ENCODE measurements at regions of chr6 and their contacts with region 1.

Region 1: GRCh38 chr6:44265007-44265721 is at the start of gene NFKBIE:
- DNase-seq: peak; percentile 89
- H3K4me3 Mint-ChIP-seq: peak within 1 kb of the TSS; percentile 97
- H3K27ac Mint-ChIP-seq: peak within 1 kb of the TSS; percentile 91
- H3K4me1 Mint-ChIP-seq: peaks cover 43% of the 10 kb centered on the region
- H3K27me3 Mint-ChIP-seq: peaks cover 18% of the 10 kb centered on the region
- total RNA-seq, gene NFKBIE: 23.8 and 25.1 TPM in 2 replicates

Region 2: DNA sequence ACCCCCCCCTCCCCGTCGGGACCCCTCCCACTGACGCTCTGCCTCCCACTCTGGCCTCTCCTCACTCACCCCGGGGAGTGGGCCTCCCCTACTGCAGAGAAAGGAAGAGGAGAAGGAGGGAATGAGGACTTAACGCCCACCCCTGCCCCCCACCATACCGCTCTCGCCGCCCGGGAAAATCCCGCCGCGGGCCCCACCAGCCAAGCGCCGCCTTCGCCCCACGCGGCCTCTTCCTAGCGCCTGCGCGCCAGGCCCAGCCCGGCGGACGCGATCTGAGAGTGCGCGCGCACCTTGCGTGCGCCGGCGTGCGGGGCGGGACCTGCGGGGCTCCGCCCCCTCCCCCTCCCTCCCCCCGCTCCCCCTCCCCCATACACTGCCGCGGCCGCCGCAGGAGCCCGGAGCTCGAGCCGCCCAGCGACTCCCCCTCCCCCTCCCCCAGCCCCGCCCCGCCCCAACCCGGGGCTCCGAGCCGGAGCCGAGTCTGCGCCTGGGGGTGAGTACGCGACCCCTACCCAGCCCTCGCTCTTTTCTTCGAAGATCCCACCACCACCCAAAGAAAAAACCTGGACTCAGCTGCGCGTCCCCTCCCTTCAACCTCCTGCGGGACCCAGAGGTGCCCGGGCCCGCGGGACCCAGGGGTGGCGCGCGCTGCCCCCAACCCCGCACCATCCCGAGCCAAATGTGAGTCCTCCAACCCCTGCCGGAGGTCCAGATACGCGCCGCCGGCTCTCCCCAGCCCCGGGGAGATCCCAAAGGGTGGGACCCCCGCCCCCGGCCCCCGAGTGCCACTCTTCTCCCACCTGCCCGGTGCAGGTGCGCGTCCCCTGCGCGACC is 137.8 kb before region 1 on chr6 and contains the starts of genes MRPL14 and TMEM63B:
- intact Hi-C with region 1: loop called (anchors 5 kb)
- DNase-seq: peak; percentile 86
- H3K4me3 Mint-ChIP-seq: peak within 1 kb of the TSS; percentile 85
- H3K27ac Mint-ChIP-seq: peak within 1 kb of the TSS; percentile 93
- H3K4me1 Mint-ChIP-seq: peaks cover 43% of the 10 kb centered on the region
- H3K27me3 Mint-ChIP-seq: no peaks in the 10 kb centered on the region
- total RNA-seq, gene MRPL14: 67.3 and 70.3 TPM in 2 replicates
- total RNA-seq, gene TMEM63B: 20.3 and 23.6 TPM in 2 replicates

Region 3: DNA sequence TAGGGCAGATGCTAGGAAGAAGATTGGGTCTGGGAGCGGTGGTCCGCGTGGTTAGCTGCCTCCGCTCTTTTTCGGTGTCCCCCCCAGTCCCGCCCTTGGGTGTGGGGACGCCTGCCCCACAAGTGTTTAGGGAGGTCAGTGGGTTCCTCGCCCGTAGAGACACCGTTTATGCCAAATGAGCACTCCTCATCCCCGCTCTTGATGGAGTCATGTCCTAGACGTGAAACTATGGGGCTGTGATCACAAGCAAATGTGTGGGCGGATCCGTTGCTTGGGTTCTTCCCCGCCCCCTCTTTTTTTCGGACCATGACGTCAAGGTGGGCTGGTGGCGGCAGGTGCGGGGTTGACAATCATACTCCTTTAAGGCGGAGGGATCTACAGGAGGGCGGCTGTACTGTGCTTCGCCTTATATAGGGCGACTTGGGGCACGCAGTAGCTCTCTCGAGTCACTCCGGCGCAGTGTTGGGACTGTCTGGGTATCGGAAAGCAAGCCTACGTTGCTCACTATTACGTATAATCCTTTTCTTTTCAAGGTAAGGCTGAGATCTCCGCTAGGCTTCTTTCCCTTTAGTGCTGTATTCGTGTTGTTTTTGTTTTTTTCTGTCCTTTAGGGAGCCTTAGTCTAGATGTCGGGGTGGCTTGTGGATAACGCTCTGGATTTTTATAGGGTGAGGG is 18.4 kb before region 1 on chr6 and contains the start of gene HSP90AB1:
- intact Hi-C with region 1: loop called (anchors 1 kb)
- DNase-seq: peak; percentile 95
- H3K4me3 Mint-ChIP-seq: peak within 1 kb of the TSS; percentile 96
- H3K27ac Mint-ChIP-seq: peak within 1 kb of the TSS; percentile 99
- H3K4me1 Mint-ChIP-seq: peaks cover 41% of the 10 kb centered on the region
- H3K27me3 Mint-ChIP-seq: peaks cover 3% of the 10 kb centered on the region
- total RNA-seq, gene HSP90AB1: 2,402 and 2,404 TPM in 2 replicates

Region 4: GRCh38 chr6:44312901-44313788 is 48.0 kb after region 1 on chr6 and contains the start of gene AARS2:
- intact Hi-C with region 1: loop called (anchors 2 kb)
- DNase-seq: peak; percentile 88
- H3K4me3 Mint-ChIP-seq: peak within 1 kb of the TSS; percentile 99
- H3K27ac Mint-ChIP-seq: peak within 1 kb of the TSS; percentile 95
- H3K4me1 Mint-ChIP-seq: peaks cover 12% of the 10 kb centered on the region
- H3K27me3 Mint-ChIP-seq: peaks cover 4% of the 10 kb centered on the region
- total RNA-seq, gene AARS2: 21.6 and 22.9 TPM in 2 replicates

Region 5: DNA sequence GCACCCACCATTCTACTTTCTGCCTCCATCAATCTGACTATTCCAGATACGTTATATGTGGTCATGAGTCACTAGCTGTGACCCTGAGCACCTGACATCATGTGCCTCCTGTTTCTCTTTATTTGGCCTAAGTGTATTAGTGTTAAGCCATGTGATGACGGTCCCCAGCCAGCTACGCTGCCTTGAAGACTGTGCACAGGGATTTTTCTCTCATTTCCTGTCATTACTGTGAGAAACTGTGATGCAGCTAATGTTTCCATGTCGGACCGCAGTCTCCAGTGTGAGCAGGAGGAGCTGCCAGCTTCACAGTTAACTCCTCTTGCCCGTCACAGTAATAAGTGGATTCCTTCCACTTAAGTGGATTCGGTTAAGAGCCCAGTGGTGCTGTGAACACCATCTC is 67.4 kb after region 1 on chr6:
- intact Hi-C with region 1: no loop called
- DNase-seq: no peak
- H3K4me3 Mint-ChIP-seq: no peak overlapping the region
- H3K27ac Mint-ChIP-seq: no peak overlapping the region
- H3K4me1 Mint-ChIP-seq: peaks cover 2% of the 10 kb centered on the region
- H3K27me3 Mint-ChIP-seq: peaks cover 37% of the 10 kb centered on the region

Region 6: DNA sequence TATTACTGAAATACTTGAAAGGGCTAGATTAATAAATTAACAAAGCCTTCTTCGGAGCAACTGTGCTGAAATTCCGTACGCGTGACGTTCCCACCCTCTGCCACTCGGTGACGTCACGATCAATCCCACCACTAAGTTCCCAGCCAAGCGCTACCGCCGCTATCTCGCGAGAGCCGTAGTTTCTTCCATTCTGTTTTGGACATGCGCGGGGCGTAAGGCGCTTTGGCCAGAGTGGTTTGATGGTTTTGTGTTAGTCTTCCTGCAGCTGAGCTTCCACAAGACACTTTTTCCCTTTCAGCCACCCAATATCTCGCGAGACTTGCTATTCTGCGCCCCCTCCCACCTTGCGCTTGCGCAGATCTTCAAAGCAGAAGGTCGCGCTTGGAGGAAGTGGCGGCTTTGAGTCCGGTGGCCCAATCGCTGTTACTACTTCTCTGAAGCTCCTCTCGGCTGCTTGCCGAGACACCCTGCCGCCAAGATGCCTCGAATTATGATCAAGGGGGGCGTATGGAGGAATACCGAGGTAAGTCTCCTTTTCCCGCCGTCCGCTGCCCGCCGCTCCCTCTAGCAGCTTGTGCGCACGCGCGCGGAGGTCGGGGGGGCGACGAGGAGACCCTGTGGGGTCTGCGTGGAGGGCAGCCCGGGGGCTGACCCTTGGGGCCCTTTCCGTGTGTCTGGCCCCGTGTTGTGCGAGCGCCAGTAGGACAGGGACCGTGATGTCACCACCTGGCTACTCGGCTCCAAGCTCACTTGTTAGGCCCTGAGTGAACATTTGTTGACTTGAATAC is 122.4 kb after region 1 on chr6 and contains the start of gene CDC5L:
- intact Hi-C with region 1: loop called (anchors 5 kb)
- DNase-seq: peak; percentile 94
- H3K4me3 Mint-ChIP-seq: peak within 1 kb of the TSS; percentile 96
- H3K27ac Mint-ChIP-seq: peak within 1 kb of the TSS; percentile 98
- H3K4me1 Mint-ChIP-seq: peaks cover 33% of the 10 kb centered on the region
- H3K27me3 Mint-ChIP-seq: peaks cover 17% of the 10 kb centered on the region
- total RNA-seq, gene CDC5L: 27.7 and 28.1 TPM in 2 replicates

Measured in activated T-helper 2 cell treated with anti-CD3 and anti-CD28 coated beads, Interferon-gamma antibody, Interleukin-2, Interleukin-4, amounts not matched to agents 10 μg/mL and 5 μg/mL and 100 μg/mL, durations not matched to agents 14 hours and 24 hours and 36 hours (primary cell).